Endothelial cell of umbilical vein (primary cell): ENCODE measurements at regions of chr1 and their contacts with region 1.

Region 1: GRCh38 chr1:220189750-220190347 is 82.4 kb downstream of the RAB3GAP2 start:
- DNase-seq: peak; percentile 25
- H3K4me3 ChIP-seq: no peak overlapping the region
- H3K27ac ChIP-seq: no peak overlapping the region
- H3K4me1 ChIP-seq: no peaks in the 10 kb centered on the region
- H3K27me3 ChIP-seq: no peaks in the 10 kb centered on the region
- CTCF ChIP-seq: peak; percentile 18 to 31
- POLR2A ChIP-seq: no peak

Region 2: DNA sequence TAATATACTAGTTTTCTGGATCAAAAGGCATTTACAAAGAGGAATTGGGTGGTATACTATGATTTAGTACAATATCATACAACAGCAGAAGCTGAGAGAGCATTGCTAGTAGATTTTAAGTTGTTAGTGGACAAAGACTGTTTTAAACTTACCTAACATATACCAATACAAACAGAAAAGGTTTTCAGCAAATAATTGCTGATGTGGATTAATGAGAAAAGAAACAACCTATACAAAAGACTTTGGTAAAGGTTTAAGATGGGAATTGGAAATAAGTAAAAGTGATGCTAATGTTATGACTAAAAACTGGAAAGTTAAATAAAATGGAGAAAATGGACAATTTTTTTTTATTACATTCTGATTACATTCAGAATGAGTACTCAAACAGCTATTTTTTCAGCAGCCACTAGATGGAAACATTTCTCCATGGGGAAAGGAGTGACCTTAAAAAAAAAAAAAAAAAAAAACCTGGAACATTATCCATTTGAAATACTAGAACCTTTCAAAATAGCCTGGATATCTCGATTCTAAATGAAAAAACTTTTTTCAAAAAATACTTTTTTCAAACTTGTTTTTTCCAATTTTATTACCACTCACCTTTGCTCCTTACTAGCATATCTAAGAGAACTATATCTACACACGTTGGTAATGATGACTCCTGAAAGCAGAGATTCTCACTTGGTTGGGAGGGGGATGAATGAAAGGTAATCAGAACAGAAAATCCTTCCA is 198.9 kb before region 1 on chr1:
- CTCF ChIA-PET with region 1: interaction called, 18 read pairs
- POLR2A ChIA-PET with region 1: no interaction called
- dilution Hi-C with region 1: no loop called
- intact Hi-C with region 1: loop called (anchors 2 kb)
- DNase-seq: peak; percentile 58
- H3K4me3 ChIP-seq: no peak overlapping the region
- H3K27ac ChIP-seq: no peak overlapping the region
- H3K4me1 ChIP-seq: no peaks in the 10 kb centered on the region
- H3K27me3 ChIP-seq: no peaks in the 10 kb centered on the region
- CTCF ChIP-seq: peak; percentile 31 to 47
- POLR2A ChIP-seq: no peak

Region 3: DNA sequence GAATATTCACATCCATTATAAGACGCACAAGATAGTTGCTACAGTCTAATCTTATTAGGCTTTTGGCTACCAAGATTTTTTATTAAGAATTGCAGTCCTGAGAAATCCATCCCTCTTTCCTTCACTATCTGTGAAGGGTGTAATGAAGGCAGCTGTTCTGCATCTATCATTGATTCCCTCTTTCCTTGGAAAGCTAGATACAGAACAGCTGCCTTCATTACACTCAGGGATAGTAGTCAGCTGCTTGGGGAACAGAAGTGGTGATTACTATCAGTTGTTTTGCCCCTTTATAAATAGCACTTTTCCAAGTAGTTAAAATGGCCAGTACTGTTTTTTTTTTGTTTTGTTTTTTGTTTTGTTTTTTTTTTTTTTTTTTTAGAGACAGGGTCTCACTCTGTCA is 25.7 kb before region 1 on chr1:
- CTCF ChIA-PET with region 1: interaction called, 11 read pairs
- POLR2A ChIA-PET with region 1: no interaction called
- dilution Hi-C with region 1: no loop called
- intact Hi-C with region 1: no loop called
- DNase-seq: no peak
- H3K4me3 ChIP-seq: no peak overlapping the region
- H3K27ac ChIP-seq: no peak overlapping the region
- H3K4me1 ChIP-seq: no peaks in the 10 kb centered on the region
- H3K27me3 ChIP-seq: no peaks in the 10 kb centered on the region
- CTCF ChIP-seq: no peak
- POLR2A ChIP-seq: no peak

Region 4: GRCh38 chr1:220170836-220171526 is 18.9 kb before region 1 on chr1:
- CTCF ChIA-PET with region 1: interaction called, 12 read pairs
- POLR2A ChIA-PET with region 1: no interaction called
- dilution Hi-C with region 1: no loop called
- intact Hi-C with region 1: no loop called
- DNase-seq: no peak
- H3K4me3 ChIP-seq: no peak overlapping the region
- H3K27ac ChIP-seq: no peak overlapping the region
- H3K4me1 ChIP-seq: no peaks in the 10 kb centered on the region
- H3K27me3 ChIP-seq: no peaks in the 10 kb centered on the region
- CTCF ChIP-seq: no peak
- POLR2A ChIP-seq: no peak

Region 5: DNA sequence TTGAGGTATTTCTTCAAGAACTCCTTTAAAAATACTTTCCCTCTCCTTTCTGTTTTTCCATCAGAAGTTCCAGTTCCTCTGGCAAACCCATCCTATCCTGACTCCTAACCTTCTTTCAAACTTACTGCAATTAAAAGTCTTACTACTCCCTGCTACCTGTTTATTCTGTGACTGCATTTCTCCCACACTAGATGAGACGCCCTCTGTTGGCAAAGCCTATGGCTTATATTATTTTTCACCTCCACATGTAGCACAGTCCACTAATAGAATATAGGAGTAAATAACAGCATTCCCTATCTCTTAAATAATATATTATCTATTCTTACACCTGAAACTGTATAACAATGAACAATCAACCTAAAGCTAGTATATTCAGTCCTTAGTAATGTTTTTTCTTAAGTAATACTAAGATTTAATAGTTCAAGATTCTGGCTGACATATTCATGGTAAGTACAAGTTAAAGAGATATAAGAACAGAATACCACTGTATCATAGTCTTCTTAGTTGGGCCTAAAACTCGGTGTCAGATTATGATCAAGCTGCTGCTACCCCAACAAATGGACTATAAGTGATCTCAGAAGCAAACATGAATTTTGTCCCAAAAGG is 27.6 kb after region 1 on chr1:
- CTCF ChIA-PET with region 1: interaction called, 12 read pairs
- POLR2A ChIA-PET with region 1: no interaction called
- dilution Hi-C with region 1: no loop called
- intact Hi-C with region 1: no loop called
- DNase-seq: peak; percentile 29
- H3K4me3 ChIP-seq: no peak overlapping the region
- H3K27ac ChIP-seq: no peak overlapping the region
- H3K4me1 ChIP-seq: no peaks in the 10 kb centered on the region
- H3K27me3 ChIP-seq: no peaks in the 10 kb centered on the region
- CTCF ChIP-seq: peak; percentile 13 to 26
- POLR2A ChIP-seq: no peak

Region 6: DNA sequence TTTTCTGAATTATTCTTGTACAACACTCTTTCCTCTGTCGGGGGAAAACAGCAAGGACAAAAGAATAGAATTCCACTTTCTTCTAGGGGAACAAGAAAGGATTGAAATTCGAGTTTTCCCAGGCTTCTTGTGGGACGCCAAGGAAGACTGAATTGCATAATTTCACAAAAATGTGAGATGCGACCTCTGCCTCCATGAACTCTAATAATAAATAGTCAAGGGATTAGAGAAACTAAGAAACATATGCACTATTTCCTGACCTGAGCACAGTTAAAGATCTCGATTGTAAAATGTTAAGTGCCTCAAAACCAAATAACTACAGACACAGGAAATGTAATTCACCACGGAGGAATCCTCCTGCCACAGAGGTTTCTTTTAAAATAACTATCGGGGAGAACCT is 220.8 kb after region 1 on chr1:
- CTCF ChIA-PET with region 1: no interaction called
- POLR2A ChIA-PET with region 1: no interaction called
- dilution Hi-C with region 1: no loop called
- intact Hi-C with region 1: no loop called
- DNase-seq: no peak
- H3K4me3 ChIP-seq: no peak overlapping the region
- H3K27ac ChIP-seq: no peak overlapping the region
- H3K4me1 ChIP-seq: no peaks in the 10 kb centered on the region
- H3K27me3 ChIP-seq: no peaks in the 10 kb centered on the region
- CTCF ChIP-seq: no peak
- POLR2A ChIP-seq: no peak

Region 7: DNA sequence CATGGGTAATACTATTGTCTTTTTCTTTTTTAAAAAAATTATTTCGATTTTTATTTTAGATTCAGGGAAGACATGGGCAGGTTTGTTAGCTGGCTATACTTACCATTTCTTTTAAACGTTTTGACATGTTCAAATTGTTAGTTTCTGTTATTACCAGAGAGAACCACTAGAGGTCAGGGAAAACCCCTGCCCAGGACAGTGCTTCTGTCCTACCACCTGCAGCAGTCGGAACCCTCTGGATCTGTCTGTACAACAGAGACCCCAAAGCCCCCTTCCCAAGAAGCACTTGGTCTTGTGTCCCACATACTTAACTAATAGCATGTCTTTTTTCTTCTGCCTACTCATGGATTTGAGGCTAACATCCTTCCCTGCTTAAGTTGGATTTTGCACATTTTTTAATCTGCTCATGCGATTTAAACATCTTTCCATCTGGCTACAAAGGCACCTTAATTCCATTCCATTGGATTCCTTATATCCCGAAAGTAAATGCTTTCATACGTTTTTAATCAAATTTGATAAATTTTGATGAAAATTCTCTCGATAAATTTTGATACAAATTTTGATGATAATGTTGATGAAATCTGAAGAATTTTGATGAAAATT is 490.3 kb after region 1 on chr1:
- CTCF ChIA-PET with region 1: no interaction called
- POLR2A ChIA-PET with region 1: no interaction called
- dilution Hi-C with region 1: no loop called
- intact Hi-C with region 1: loop called (anchors 10 kb)
- DNase-seq: peak; percentile 70
- H3K4me3 ChIP-seq: no peak overlapping the region
- H3K27ac ChIP-seq: no peak overlapping the region
- H3K4me1 ChIP-seq: no peaks in the 10 kb centered on the region
- H3K27me3 ChIP-seq: no peaks in the 10 kb centered on the region
- CTCF ChIP-seq: peak; percentile 60 to 64
- POLR2A ChIP-seq: no peak

Region 8: GRCh38 chr1:220803401-220804201 is 613.8 kb after region 1 on chr1:
- CTCF ChIA-PET with region 1: interaction called, 12 read pairs
- POLR2A ChIA-PET with region 1: no interaction called
- dilution Hi-C with region 1: no loop called
- intact Hi-C with region 1: no loop called
- DNase-seq: peak; percentile 59
- H3K4me3 ChIP-seq: no peak overlapping the region
- H3K27ac ChIP-seq: no peak overlapping the region
- H3K4me1 ChIP-seq: no peaks in the 10 kb centered on the region
- H3K27me3 ChIP-seq: peaks cover 6 to 11% of the 10 kb centered on the region in 2 experiments
- CTCF ChIP-seq: peak; percentile 62 to 83
- POLR2A ChIP-seq: no peak